T-cell (primary cell): ENCODE measurements at regions of chr1 and their contacts with region 1.

Region 1: DNA sequence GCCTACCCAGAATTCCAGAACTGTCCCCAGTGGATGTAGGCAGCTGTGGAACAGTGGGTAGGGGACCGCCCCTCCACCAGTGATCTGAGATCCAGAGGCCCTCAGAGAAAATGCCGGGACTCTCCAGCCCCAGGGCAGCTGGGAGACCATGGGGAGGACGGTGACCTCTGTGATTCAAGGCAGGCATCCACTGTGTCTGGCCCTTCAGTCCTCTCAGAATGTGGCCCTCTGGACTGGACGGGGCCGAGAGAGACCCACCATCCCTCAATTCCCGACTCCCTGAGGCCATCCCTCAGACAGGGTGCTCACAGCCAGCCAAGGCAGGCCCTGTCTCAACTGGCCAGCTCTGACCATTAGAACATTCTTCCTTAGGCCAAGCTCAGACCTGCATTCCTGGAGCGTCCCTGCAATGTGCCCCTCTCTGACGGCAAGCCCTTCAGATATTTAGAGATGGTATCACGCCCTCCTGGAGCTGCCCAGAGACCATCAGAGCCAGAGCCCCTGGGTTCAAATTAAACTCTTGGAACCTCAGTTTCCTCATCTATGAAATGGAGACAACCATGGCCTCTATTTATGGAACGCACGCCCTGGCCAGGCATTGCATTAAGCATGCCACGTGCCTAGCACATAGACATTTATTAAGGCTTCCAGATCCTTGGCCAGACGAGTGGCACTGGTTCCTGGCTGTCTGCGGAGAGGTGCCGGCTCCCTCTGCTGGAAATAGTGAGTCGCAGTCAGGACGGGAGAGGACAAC is 9.6 kb upstream of the EPS8L3 start:
- DNase-seq: peak; percentile 37 to 82 (median 60)
- ATAC-seq: peak; percentile 83 to 94 (median 86)
- H3K4me3 ChIP-seq: no peak overlapping the region
- H3K4me3 Mint-ChIP-seq: no peak overlapping the region
- H3K27ac ChIP-seq: no peak overlapping the region
- H3K27ac Mint-ChIP-seq: no peak overlapping the region
- H3K4me1 ChIP-seq: peaks cover 0 to 18% of the 10 kb centered on the region in 2 experiments
- H3K4me1 Mint-ChIP-seq: peaks cover 7 to 16% (median 9%) of the 10 kb centered on the region in 3 donors
- H3K27me3 ChIP-seq: peaks cover 0 to 20% of the 10 kb centered on the region in 2 experiments
- H3K27me3 Mint-ChIP-seq: no peaks in the 10 kb centered on the region

Region 2: GRCh38 chr1:109482791-109483671 is 290.3 kb before region 1 on chr1:
- CTCF ChIA-PET with region 1: no interaction called
- POLR2A ChIA-PET with region 1: no interaction called
- DNase-seq: peak in 14 of 35 experiments; percentile 15 to 69 (median 38)
- ATAC-seq: peak; percentile 33 to 54 (median 44)
- H3K4me3 ChIP-seq: peak overlapping the region; percentile 77 to 84
- H3K4me3 Mint-ChIP-seq: peak overlapping the region; percentile 92 to 96 (median 92)
- H3K27ac ChIP-seq: peak overlapping the region; percentile 66
- H3K27ac Mint-ChIP-seq: peak overlapping the region; percentile 92 to 93
- H3K4me1 ChIP-seq: peaks cover 12 to 26% of the 10 kb centered on the region in 2 experiments
- H3K4me1 Mint-ChIP-seq: peaks cover 35 to 39% (median 37%) of the 10 kb centered on the region in 3 donors
- H3K27me3 ChIP-seq: peaks cover 0 to 10% of the 10 kb centered on the region in 2 experiments
- H3K27me3 Mint-ChIP-seq: peaks cover 4 to 21% of the 10 kb centered on the region in 2 donors

Region 3: GRCh38 chr1:109640285-109640865 is 132.9 kb before region 1 on chr1:
- CTCF ChIA-PET with region 1: interaction called, 34 to 37 read pairs
- POLR2A ChIA-PET with region 1: no interaction called
- DNase-seq: peak; percentile 58 to 95 (median 85)
- ATAC-seq: peak; percentile 70 to 87 (median 74)
- H3K4me3 ChIP-seq: no peak overlapping the region
- H3K4me3 Mint-ChIP-seq: no peak overlapping the region
- H3K27ac ChIP-seq: no peak overlapping the region
- H3K27ac Mint-ChIP-seq: peak overlapping the region in 1 of 2 donors; percentile 57
- H3K4me1 ChIP-seq: peaks cover 0 to 20% of the 10 kb centered on the region in 2 experiments
- H3K4me1 Mint-ChIP-seq: peaks cover 6 to 17% (median 14%) of the 10 kb centered on the region in 3 donors
- H3K27me3 ChIP-seq: peaks cover 0 to 23% of the 10 kb centered on the region in 2 experiments
- H3K27me3 Mint-ChIP-seq: no peaks in the 10 kb centered on the region

Region 4: GRCh38 chr1:109790735-109791494 is 17.6 kb after region 1 on chr1:
- CTCF ChIA-PET with region 1: interaction called, 3 to 24 read pairs
- POLR2A ChIA-PET with region 1: no interaction called
- DNase-seq: peak; percentile 59 to 85 (median 72)
- ATAC-seq: peak; percentile 95 to 99 (median 97)
- H3K4me3 ChIP-seq: no peak overlapping the region
- H3K4me3 Mint-ChIP-seq: peak overlapping the region in 1 of 3 donors; percentile 59
- H3K27ac ChIP-seq: peak overlapping the region; percentile 84
- H3K27ac Mint-ChIP-seq: peak overlapping the region; percentile 90 to 94
- H3K4me1 ChIP-seq: peaks cover 25 to 81% of the 10 kb centered on the region in 2 experiments
- H3K4me1 Mint-ChIP-seq: peaks cover 59 to 88% (median 74%) of the 10 kb centered on the region in 3 donors
- H3K27me3 ChIP-seq: no peaks in the 10 kb centered on the region
- H3K27me3 Mint-ChIP-seq: no peaks in the 10 kb centered on the region

Region 5: GRCh38 chr1:109850827-109851226 is 77.5 kb after region 1 on chr1:
- CTCF ChIA-PET with region 1: no interaction called
- POLR2A ChIA-PET with region 1: no interaction called
- DNase-seq: no peak
- ATAC-seq: no peak
- H3K4me3 ChIP-seq: no peak overlapping the region
- H3K4me3 Mint-ChIP-seq: no peak overlapping the region
- H3K27ac ChIP-seq: no peak overlapping the region
- H3K27ac Mint-ChIP-seq: no peak overlapping the region
- H3K4me1 ChIP-seq: no peaks in the 10 kb centered on the region
- H3K4me1 Mint-ChIP-seq: peaks cover 0 to 4% (median 0%) of the 10 kb centered on the region in 3 donors
- H3K27me3 ChIP-seq: peaks cover 0 to 10% of the 10 kb centered on the region in 2 experiments
- H3K27me3 Mint-ChIP-seq: peaks cover 0 to 2% of the 10 kb centered on the region in 2 donors

Region 6: DNA sequence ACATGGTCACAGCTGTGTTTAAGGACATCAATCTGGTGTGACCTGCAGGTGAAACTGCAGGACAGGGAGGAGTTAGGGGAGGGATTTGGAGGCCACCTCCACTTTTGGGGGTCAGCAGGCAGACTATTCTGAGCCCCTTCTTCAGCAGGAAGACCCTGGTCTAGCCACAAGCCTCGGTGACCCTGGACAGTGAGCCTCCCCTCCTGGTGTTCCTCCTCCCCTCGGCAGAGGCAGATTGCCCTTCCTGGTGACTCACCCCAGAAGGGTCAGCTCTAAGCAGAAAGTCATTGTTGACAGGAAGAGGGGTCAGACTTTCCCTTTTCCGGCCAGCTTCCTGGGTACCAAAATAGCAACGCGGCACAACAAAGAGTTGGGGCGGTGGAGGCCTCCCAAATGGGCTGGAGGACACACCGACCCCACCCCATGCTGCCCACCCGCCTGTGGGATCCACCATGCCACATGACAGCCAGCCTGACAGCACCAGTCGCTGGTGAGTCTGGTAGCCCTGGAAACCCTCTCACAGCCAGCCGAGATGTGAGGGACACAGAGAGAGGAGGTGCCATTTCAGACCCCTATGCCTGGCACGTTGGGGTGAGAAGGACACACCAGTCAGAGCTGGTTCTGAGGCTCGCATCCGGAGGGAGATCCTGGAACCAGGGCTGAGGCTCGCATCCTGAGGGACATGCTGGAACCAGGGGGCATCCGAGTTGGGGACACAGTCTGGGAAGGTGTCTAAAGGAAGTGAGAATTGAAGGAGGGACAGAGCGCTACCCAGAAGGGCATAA is 122.6 kb after region 1 on chr1:
- CTCF ChIA-PET with region 1: no interaction called
- POLR2A ChIA-PET with region 1: no interaction called
- DNase-seq: peak in 7 of 35 experiments; percentile 3 to 50 (median 18)
- ATAC-seq: no peak
- H3K4me3 ChIP-seq: no peak overlapping the region
- H3K4me3 Mint-ChIP-seq: no peak overlapping the region
- H3K27ac ChIP-seq: no peak overlapping the region
- H3K27ac Mint-ChIP-seq: no peak overlapping the region
- H3K4me1 ChIP-seq: peaks cover 0 to 18% of the 10 kb centered on the region in 2 experiments
- H3K4me1 Mint-ChIP-seq: peaks cover 6 to 19% (median 10%) of the 10 kb centered on the region in 3 donors
- H3K27me3 ChIP-seq: peaks cover 0 to 5% of the 10 kb centered on the region in 2 experiments
- H3K27me3 Mint-ChIP-seq: no peaks in the 10 kb centered on the region

Region 7: GRCh38 chr1:110011527-110012041 is 238.3 kb after region 1 on chr1:
- CTCF ChIA-PET with region 1: interaction called, 3 to 15 read pairs
- POLR2A ChIA-PET with region 1: no interaction called
- DNase-seq: peak in 25 of 35 experiments; percentile 8 to 58 (median 21)
- ATAC-seq: peak; percentile 81 to 92 (median 84)
- H3K4me3 ChIP-seq: no peak overlapping the region
- H3K4me3 Mint-ChIP-seq: no peak overlapping the region
- H3K27ac ChIP-seq: no peak overlapping the region
- H3K27ac Mint-ChIP-seq: peak overlapping the region; percentile 49 to 57
- H3K4me1 ChIP-seq: no peaks in the 10 kb centered on the region
- H3K4me1 Mint-ChIP-seq: peaks cover 3 to 6% (median 5%) of the 10 kb centered on the region in 3 donors
- H3K27me3 ChIP-seq: no peaks in the 10 kb centered on the region
- H3K27me3 Mint-ChIP-seq: no peaks in the 10 kb centered on the region